CD8-positive, alpha-beta T cell (primary cell): ENCODE measurements at regions of chrX and their contacts with region 1.

Region 1: GRCh38 chrX:96807318-96807717 is 76.4 kb upstream of the RPA4 start:
- DNase-seq: no peak
- ATAC-seq: no peak
- H3K4me3 ChIP-seq: no peak overlapping the region
- H3K4me3 Mint-ChIP-seq: no peak overlapping the region
- H3K27ac ChIP-seq: no peak overlapping the region
- H3K27ac Mint-ChIP-seq: no peak overlapping the region
- H3K4me1 ChIP-seq: no peaks in the 10 kb centered on the region
- H3K4me1 Mint-ChIP-seq: no peaks in the 10 kb centered on the region
- H3K27me3 ChIP-seq: no peaks in the 10 kb centered on the region
- H3K27me3 Mint-ChIP-seq: no peaks in the 10 kb centered on the region
- CTCF ChIP-seq: no peak

Region 2: GRCh38 chrX:96889722-96890121 is 82.4 kb after region 1 on chrX:
- CTCF ChIA-PET with region 1: no interaction called
- POLR2A ChIA-PET with region 1: no interaction called
- intact Hi-C with region 1: no loop called
- DNase-seq: no peak
- ATAC-seq: no peak
- H3K4me3 ChIP-seq: no peak overlapping the region
- H3K4me3 Mint-ChIP-seq: no peak overlapping the region
- H3K27ac ChIP-seq: no peak overlapping the region
- H3K27ac Mint-ChIP-seq: no peak overlapping the region
- H3K4me1 ChIP-seq: no peaks in the 10 kb centered on the region
- H3K4me1 Mint-ChIP-seq: no peaks in the 10 kb centered on the region
- H3K27me3 ChIP-seq: no peaks in the 10 kb centered on the region
- H3K27me3 Mint-ChIP-seq: no peaks in the 10 kb centered on the region
- CTCF ChIP-seq: no peak

Region 3: GRCh38 chrX:97290199-97290598 is 482.9 kb after region 1 on chrX:
- CTCF ChIA-PET with region 1: no interaction called
- POLR2A ChIA-PET with region 1: no interaction called
- intact Hi-C with region 1: loop called in 1 of 2 experiments (anchors 5 kb)
- DNase-seq: no peak
- ATAC-seq: no peak
- H3K4me3 ChIP-seq: no peak overlapping the region
- H3K4me3 Mint-ChIP-seq: no peak overlapping the region
- H3K27ac ChIP-seq: no peak overlapping the region
- H3K27ac Mint-ChIP-seq: no peak overlapping the region
- H3K4me1 ChIP-seq: no peaks in the 10 kb centered on the region
- H3K4me1 Mint-ChIP-seq: no peaks in the 10 kb centered on the region
- H3K27me3 ChIP-seq: no peaks in the 10 kb centered on the region
- H3K27me3 Mint-ChIP-seq: no peaks in the 10 kb centered on the region
- CTCF ChIP-seq: no peak